ENCODE measurements at regions of chr14 and their contacts with region 1.

Region 1: DNA sequence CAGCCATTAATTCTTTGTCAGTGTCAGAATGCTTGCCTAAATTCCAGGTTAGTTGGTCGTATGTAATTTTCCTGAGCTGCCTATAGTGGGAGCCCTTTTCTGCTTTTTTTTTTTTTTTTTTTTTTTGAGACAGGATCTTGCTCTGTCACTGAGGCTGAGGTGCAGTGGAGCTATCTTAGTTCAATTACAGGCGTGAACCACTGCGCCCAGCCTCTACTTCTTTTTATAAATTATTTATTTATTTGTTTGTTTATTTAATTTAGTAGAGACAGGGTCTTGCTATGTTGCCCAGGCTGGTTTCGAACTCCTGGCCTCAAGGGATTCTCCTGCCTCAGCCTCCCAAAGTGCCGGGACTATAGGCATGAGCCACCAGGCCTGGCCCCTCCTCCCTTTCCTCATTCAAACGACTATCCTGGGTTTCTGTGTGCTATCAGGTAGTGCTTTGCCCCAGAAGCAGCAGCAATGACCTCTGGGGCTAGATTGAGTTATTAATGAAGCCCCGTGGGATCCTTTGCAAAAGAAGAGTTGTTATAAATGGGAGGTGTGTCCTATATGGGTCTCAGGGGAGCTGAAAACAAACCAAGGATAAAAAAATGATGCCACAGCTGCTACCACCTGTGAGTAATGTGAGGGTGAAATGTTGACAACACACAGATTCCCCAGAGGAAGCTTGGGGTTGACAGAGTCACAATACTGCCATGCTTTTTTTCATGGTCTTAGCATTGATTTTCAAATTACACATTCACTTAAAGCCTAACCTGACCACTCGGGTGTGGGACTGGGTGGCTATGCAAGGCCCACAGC is 34.6 kb upstream of the NFKBIA start:
- DNase-seq: no peak
- ATAC-seq: peak; percentile 93
- H3K4me3 Mint-ChIP-seq: no peak overlapping the region
- H3K27ac Mint-ChIP-seq: no peak overlapping the region
- H3K4me1 Mint-ChIP-seq: peaks cover 10% of the 10 kb centered on the region
- H3K27me3 Mint-ChIP-seq: peaks cover 3% of the 10 kb centered on the region
- CTCF ChIP-seq: no peak

Region 2: GRCh38 chr14:35355981-35356841 is 82.9 kb before region 1 on chr14:
- CTCF ChIA-PET with region 1: no interaction called
- POLR2A ChIA-PET with region 1: no interaction called
- intact Hi-C with region 1: no loop called
- DNase-seq: no peak
- ATAC-seq: no peak
- H3K4me3 Mint-ChIP-seq: no peak overlapping the region
- H3K27ac Mint-ChIP-seq: no peak overlapping the region
- H3K4me1 Mint-ChIP-seq: peaks cover 10% of the 10 kb centered on the region
- H3K27me3 Mint-ChIP-seq: peaks cover 3% of the 10 kb centered on the region
- CTCF ChIP-seq: no peak

Region 3: GRCh38 chr14:35390577-35391387 is 48.3 kb before region 1 on chr14:
- CTCF ChIA-PET with region 1: no interaction called
- POLR2A ChIA-PET with region 1: no interaction called
- intact Hi-C with region 1: no loop called
- DNase-seq: no peak
- ATAC-seq: peak; percentile 37
- H3K4me3 Mint-ChIP-seq: no peak overlapping the region
- H3K27ac Mint-ChIP-seq: no peak overlapping the region
- H3K4me1 Mint-ChIP-seq: peaks cover 4% of the 10 kb centered on the region
- H3K27me3 Mint-ChIP-seq: no peaks in the 10 kb centered on the region
- CTCF ChIP-seq: no peak

Region 4: GRCh38 chr14:35533357-35534207 is 94.5 kb after region 1 on chr14 and contains the start of gene INSM2:
- CTCF ChIA-PET with region 1: no interaction called
- POLR2A ChIA-PET with region 1: no interaction called
- intact Hi-C with region 1: loop called (anchors 5 kb)
- DNase-seq: peak; percentile 55
- ATAC-seq: peak; percentile 76
- H3K4me3 Mint-ChIP-seq: peak within 1 kb of the TSS; percentile 81
- H3K27ac Mint-ChIP-seq: no peak within 1 kb of the TSS
- H3K4me1 Mint-ChIP-seq: peaks cover 16% of the 10 kb centered on the region
- H3K27me3 Mint-ChIP-seq: peaks cover 41% of the 10 kb centered on the region
- CTCF ChIP-seq: no peak
- total RNA-seq, gene INSM2: not detected in 2 replicates

Measured in activated B cell treated with CpG ODN at 0.5 μM for 24 hours (primary cell).